Activated T-helper 1 cell treated with anti-CD3 and anti-CD28 coated beads, Interleukin-12 subunit alpha, Interleukin-12 subunit beta, Interleukin-2, Interleukin-4 antibody, amounts not matched to agents 30 ng/mL and 10 ng/mL and 1 ng/mL, durations not matched to agents 14 hours and 24 hours and 36 hours (primary cell): ENCODE measurements at regions of chr7 and their contacts with region 1.

Region 1: DNA sequence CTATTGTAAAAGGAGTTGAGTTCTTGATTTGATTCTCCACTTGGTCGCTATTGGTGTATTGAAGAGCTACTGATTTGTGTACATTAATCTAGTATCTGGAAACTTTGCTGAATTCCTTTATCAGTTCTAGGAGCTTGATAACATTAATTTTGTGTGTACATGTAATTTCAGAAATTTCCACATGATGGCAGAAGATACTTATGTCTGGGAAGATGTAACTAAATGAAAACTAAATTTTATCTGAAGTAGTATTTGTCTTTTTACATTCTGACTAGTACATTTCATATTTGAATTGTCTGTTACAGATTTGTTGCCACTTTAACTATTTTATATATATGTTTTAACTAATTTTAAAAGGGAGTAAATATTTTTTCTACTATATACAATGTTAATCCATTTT is 27.6 kb downstream of the SDHAF3 start:
- DNase-seq: no peak
- H3K4me3 Mint-ChIP-seq: no peak overlapping the region
- H3K27ac Mint-ChIP-seq: no peak overlapping the region
- H3K4me1 Mint-ChIP-seq: no peaks in the 10 kb centered on the region
- H3K27me3 Mint-ChIP-seq: no peaks in the 10 kb centered on the region

Region 2: GRCh38 chr7:97043281-97043680 is 101.8 kb before region 1 on chr7:
- intact Hi-C with region 1: no loop called
- DNase-seq: no peak
- H3K4me3 Mint-ChIP-seq: no peak overlapping the region
- H3K27ac Mint-ChIP-seq: no peak overlapping the region
- H3K4me1 Mint-ChIP-seq: no peaks in the 10 kb centered on the region
- H3K27me3 Mint-ChIP-seq: peaks cover 11% of the 10 kb centered on the region

Region 3: GRCh38 chr7:97179454-97180104 is 34.5 kb after region 1 on chr7:
- intact Hi-C with region 1: loop called (anchors 1 kb)
- DNase-seq: peak; percentile 5
- H3K4me3 Mint-ChIP-seq: no peak overlapping the region
- H3K27ac Mint-ChIP-seq: no peak overlapping the region
- H3K4me1 Mint-ChIP-seq: no peaks in the 10 kb centered on the region
- H3K27me3 Mint-ChIP-seq: no peaks in the 10 kb centered on the region

Region 4: DNA sequence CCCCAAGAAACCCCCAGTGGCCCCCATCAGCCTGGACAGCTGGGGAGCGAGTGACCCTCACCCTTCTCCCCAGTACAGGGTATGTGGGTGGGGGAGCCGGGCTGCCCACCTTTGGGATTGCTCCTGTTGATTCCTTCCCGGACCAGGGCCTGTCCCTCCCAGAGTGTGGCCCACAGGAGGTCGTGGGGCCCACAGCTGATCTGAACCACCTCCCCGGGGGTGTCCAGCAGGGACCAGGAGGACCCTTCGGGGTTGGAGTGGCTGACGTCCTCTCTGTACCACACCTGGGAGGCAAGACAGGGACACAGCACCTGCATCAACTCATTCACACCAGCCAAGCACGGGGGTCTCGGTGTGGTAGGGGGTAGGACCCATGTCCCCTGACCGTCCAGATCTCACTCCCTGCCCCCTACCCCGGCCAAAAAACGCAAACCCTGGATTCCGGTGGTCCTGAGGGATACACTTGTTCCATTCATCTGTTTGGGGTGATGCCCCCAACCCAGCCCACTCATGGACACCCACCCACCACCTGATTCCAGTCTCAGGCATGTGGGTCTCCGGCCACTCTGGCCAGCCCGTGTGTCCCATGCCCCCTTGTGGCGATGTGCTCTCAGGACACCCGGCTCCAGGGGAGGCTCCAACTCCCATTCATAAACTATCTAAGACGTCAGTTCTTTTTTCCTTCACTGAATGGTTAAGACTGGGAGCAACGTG is 1096.0 kb after region 1 on chr7:
- intact Hi-C with region 1: no loop called
- DNase-seq: no peak
- H3K4me3 Mint-ChIP-seq: no peak overlapping the region
- H3K27ac Mint-ChIP-seq: no peak overlapping the region
- H3K4me1 Mint-ChIP-seq: no peaks in the 10 kb centered on the region
- H3K27me3 Mint-ChIP-seq: no peaks in the 10 kb centered on the region